Psoas muscle (tissue), 8 donors: ENCODE measurements at regions of chr5 and their contacts with region 1.

Region 1: DNA sequence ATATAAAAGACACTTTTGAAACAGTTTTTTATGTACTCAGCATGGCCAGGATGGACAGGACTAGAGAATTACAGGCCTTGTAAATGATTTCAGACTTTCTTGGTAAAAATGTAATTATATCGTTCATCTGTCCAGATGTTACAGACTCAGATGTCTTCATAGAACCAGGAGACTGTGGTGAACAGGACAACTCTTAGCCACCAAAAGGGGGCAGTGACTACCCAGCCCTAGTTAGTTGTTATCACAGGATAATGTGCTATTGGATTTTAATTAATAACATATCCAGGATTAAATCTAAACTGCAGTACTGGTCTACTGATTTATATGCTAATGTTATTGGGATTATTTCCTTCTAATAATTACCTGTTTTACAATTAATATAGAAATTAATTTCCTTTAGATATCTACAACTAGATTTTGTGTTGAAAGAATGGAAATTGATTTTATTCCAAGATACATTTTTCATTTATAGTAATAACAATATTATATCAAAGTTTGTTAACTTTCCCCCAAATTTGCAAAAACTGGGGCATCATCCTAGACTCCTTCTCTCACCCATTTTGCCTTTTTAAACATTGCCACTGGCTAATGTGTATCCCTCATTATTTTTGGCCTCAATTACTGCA is 99.4 kb downstream of the MTREX start:
- DNase-seq: no peak
- ATAC-seq: peak in 3 of 4 donors; percentile 71 to 91 (median 87)
- H3K4me3 ChIP-seq: no peak overlapping the region
- H3K27ac ChIP-seq: no peak overlapping the region
- H3K4me1 ChIP-seq: no peaks in the 10 kb centered on the region
- H3K27me3 ChIP-seq: no peaks in the 10 kb centered on the region
- CTCF ChIP-seq: peak; percentile 69

Region 2: DNA sequence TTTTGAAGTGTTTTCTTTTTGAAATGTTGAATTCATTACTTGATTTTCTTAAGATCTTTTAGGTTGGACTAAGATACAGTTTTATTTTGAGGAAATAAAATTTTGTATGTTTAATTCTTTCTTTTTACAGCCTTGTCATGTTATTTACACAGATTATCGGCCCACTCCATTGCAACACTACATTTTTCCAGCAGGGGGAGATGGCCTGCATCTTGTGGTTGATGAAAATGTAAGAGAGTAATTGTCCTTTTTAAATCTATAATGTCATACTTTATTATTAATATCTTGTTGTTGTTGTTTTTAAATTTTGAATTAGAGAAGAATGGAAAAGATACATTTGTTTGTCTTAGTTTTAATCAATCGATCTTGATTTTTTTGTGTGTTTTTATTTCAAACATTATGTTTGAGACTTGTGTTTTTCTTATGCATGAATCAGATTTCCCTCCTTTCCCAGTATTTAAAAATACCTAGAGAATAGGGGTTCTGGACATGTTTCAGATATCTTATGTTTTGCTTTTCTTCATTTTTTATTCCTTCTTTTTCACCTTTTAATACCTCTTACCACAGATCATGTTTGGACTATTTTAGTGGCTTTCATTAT is 62.7 kb before region 1 on chr5:
- intact Hi-C with region 1: loop called in 1 of 2 experiments (anchors 10 kb)
- DNase-seq: peak in 1 of 2 donors; percentile 31
- ATAC-seq: peak in 2 of 4 donors; percentile 57 to 73
- H3K4me3 ChIP-seq: no peak overlapping the region
- H3K27ac ChIP-seq: no peak overlapping the region
- H3K4me1 ChIP-seq: no peaks in the 10 kb centered on the region
- H3K27me3 ChIP-seq: no peaks in the 10 kb centered on the region
- CTCF ChIP-seq: peak; percentile 91

Region 3: DNA sequence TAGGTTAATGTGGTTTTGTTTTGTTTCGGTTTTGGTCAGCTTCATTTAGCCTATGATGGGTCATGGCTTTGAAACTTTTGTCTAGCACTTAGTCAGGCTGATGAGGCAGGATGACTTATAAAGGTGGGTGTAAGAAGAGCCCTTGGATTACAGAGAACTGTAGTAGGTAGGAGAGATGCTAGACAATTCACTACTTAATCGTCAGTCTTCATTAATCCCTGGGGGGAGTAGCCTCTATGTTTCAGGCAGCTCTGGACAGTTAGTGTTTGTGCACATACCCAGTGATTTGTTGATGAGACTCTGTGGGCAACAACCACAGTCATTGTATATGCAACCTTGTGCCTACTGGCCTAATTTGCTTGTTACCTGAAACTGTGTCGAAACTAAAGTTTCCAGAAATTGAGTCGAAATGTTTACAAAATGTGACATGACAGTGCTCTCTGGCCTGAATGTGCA is 13.9 kb after region 1 on chr5:
- intact Hi-C with region 1: no loop called
- DNase-seq: no peak
- ATAC-seq: peak in 3 of 4 donors; percentile 41 to 46 (median 45)
- H3K4me3 ChIP-seq: no peak overlapping the region
- H3K27ac ChIP-seq: no peak overlapping the region
- H3K4me1 ChIP-seq: peaks cover 39% of the 10 kb centered on the region
- H3K27me3 ChIP-seq: no peaks in the 10 kb centered on the region
- CTCF ChIP-seq: no peak